ENCODE measurements at regions of chr17 and their contacts with region 1.

Region 1: DNA sequence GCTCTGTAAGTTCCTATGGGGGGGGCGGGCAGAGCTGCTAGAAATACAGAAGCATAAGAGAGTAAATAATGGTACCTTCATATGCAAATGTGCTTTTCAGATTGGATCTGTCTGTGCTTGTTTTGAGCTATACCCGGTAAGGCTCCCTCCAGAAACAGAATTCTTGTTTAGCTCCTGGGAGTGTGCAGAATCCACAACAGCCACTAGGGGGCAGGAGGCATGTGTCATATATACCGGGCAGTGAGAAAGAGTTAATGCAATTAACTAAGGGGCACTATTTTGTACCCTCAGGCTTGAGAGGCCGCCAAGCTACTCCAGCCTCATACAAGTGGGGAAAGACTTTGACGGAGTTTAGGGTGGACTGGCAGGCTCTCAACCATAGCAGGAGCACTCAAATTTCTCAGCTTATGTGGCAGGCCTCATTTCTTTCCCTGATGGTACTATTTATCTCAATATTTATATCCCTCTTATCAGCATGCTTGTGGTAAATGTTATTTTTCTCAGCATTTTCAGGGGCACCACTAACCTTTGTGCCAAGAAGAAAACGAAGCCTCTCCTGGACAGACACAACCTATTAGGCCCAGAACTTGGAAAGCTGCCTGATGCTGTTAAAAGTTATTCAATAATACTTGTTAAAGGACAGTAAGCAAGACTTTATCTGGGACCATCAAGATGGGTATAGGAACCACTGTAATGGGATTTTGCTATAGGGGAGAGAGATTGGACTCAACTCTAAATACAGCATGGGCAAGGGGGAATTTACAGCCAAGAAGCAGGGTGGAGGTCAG is 10.7 kb upstream of the CENPV start:
- DNase-seq: peak; percentile 71 to 89 (median 82)
- H3K4me3 ChIP-seq: no peak overlapping the region
- H3K27ac ChIP-seq: no peak overlapping the region
- H3K4me1 ChIP-seq: peaks cover 0 to 3% (median 0%) of the 10 kb centered on the region in 4 experiments
- H3K27me3 ChIP-seq: no peaks in the 10 kb centered on the region

Region 2: GRCh38 chr17:16243811-16244567 is 120.0 kb before region 1 on chr17:
- CTCF ChIA-PET with region 1: no interaction called
- POLR2A ChIA-PET with region 1: no interaction called
- DNase-seq: no peak
- H3K4me3 ChIP-seq: no peak overlapping the region
- H3K27ac ChIP-seq: no peak overlapping the region
- H3K4me1 ChIP-seq: no peaks in the 10 kb centered on the region
- H3K27me3 ChIP-seq: no peaks in the 10 kb centered on the region

Region 3: DNA sequence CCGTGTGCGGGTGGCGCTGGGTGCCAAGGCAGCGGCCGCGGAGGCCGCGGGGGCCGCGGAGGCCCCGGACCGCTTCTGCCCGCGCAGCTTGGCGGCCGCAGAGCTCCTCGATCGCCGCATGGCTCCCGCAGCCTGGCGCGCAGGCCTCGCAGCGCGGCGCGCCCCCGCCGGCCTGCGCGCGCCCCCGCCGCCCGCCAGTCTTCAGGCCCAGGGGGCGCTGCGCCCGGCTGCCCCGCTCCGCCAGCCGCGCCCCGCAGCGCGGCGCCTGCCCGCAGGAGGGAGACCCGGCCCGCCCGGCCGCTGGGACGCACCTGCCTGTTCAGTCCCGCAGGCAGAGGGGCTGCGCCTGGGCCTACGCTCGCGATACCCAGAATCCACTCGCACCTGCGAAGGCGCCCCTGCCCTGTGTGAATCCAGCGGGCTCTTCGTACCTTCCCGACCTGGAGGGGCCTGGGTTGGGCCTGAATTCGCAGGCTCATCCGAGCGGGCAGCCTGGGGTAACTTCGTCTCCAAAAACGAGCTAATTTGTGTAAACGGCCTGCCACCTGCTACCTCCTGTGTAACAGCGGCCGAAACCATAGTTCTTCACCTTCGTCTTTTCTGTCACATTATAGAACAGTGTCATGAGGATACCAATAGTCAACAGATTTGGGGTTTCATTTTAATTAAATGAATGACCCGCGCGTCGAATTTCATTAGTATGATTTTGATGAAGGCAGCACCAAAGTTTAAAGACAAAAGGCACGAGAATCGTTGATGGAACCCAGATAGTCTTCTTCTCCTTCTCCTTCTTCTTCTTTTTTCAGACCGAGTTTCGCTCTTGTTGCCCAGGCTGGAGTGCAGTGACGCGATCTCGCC is 10.4 kb before region 1 on chr17 and contains the start of gene CENPV:
- CTCF ChIA-PET with region 1: interaction called, 11 read pairs
- POLR2A ChIA-PET with region 1: interaction called, 4 read pairs
- DNase-seq: peak; percentile 69 to 81 (median 75)
- H3K4me3 ChIP-seq: peak within 1 kb of the TSS; percentile 58 to 83 (median 71)
- H3K27ac ChIP-seq: no peak within 1 kb of the TSS
- H3K4me1 ChIP-seq: peaks cover 0 to 20% (median 17%) of the 10 kb centered on the region in 4 experiments
- H3K27me3 ChIP-seq: peaks cover 0 to 7% (median 0%) of the 10 kb centered on the region in 5 experiments

Region 4: DNA sequence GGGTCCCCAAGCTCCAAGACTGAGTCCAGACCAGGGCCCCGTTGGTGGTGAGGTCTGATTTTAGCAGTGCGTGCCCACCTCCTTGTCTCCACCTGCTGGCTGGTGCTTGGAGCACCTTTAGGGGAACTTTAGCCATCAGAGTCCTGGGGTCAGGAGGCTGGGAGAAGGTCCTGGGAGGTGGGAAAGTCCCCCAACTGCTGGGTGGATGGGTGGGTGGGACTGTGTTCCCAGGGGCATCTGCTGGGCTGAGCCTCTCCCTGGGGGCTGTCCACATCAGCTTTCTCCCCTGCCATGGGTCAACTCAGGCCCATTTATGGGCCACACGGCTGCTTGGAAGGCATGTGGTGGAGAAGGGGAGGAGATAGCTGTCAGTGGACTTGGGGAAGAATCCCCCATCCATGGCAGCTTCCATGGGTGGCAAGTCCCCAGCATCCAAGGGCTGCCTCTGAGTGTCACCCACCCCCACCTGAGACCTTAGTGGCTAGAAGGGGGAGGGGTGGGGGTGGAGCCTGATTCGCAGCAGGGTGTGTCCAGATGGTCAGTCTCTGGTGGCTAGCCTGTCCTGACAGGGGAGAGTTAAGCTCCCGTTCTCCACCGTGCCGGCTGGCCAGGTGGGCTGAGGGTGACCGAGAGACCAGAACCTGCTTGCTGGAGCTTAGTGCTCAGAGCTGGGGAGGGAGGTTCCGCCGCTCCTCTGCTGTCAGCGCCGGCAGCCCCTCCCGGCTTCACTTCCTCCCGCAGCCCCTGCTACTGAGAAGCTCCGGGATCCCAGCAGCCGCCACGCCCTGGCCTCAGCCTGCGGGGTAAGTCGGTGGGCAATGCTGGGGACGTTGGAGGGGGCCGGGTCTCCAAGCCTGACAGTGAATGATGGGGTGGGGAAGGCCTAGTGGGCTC is 51.3 kb after region 1 on chr17 and contains the start of gene TRPV2:
- CTCF ChIA-PET with region 1: interaction called, 50 read pairs
- POLR2A ChIA-PET with region 1: interaction called, 13 read pairs
- DNase-seq: peak; percentile 59 to 71 (median 68)
- H3K4me3 ChIP-seq: peak within 1 kb of the TSS; percentile 58 to 92 (median 81)
- H3K27ac ChIP-seq: peak within 1 kb of the TSS; percentile 74 to 91
- H3K4me1 ChIP-seq: peaks cover 9 to 57% (median 56%) of the 10 kb centered on the region in 4 experiments
- H3K27me3 ChIP-seq: no peaks in the 10 kb centered on the region

Region 5: GRCh38 chr17:16438557-16439302 is 74.8 kb after region 1 on chr17:
- CTCF ChIA-PET with region 1: interaction called, 10 read pairs
- POLR2A ChIA-PET with region 1: interaction called, 4 read pairs
- DNase-seq: peak; percentile 99 to 100 (median 100)
- H3K4me3 ChIP-seq: peak overlapping the region; percentile 60 to 98 (median 90)
- H3K27ac ChIP-seq: peak overlapping the region; percentile 74 to 90
- H3K4me1 ChIP-seq: peaks cover 9 to 59% (median 46%) of the 10 kb centered on the region in 4 experiments
- H3K27me3 ChIP-seq: no peaks in the 10 kb centered on the region

Region 6: GRCh38 chr17:16521070-16521727 is 157.3 kb after region 1 on chr17:
- CTCF ChIA-PET with region 1: interaction called, 28 read pairs
- POLR2A ChIA-PET with region 1: no interaction called
- DNase-seq: peak; percentile 88 to 95 (median 92)
- H3K4me3 ChIP-seq: peak overlapping the region in 1 of 7 experiments; percentile 6
- H3K27ac ChIP-seq: no peak overlapping the region
- H3K4me1 ChIP-seq: peaks cover 0 to 4% (median 3%) of the 10 kb centered on the region in 4 experiments
- H3K27me3 ChIP-seq: peaks cover 0 to 12% (median 0%) of the 10 kb centered on the region in 5 experiments

Measured in common myeloid progenitor, CD34-positive (primary cell).